ENCODE measurements at regions of chr3 and their contacts with region 1.

Region 1: DNA sequence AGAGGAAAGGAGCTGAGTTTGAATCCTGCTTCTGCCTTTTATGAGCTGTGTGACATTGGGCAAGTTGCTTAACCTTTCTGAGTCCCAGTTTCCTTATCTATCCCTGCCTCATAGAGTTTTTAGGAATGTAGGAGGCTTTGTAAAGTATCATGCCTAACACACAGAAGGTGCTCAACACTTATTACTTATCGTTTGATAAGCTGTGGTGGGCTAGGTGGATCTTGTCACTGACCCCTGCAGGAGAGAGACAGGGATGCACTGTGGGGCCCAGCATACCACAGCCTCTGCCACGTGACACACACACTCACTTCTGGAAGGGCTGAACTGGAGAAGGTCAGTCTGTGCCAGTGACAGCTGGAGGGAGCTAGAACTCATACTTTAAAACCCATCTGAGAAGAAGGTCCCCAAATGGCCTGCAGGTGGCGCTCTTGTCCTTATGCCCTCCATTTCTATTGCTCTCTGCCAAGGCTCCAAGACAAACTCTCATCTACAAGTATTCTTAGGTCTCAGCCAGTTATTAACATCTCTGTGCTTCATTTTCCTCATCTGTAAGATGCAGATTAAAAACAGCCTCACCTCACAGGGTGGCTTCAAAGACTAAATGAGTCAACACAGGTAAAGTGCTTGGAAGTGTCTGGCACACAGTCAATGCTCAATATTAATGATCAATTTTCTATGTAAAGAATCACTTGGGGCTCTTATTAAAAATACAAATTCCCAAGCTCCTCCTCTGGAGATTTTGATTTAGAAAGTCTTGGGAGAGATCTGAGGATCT is 57.5 kb upstream of the HACD2 start:
- DNase-seq: peak; percentile 84

Region 2: GRCh38 chr3:123652346-123652984 is 10.1 kb after region 1 on chr3:
- CTCF ChIA-PET with region 1: interaction called, 24 read pairs
- POLR2A ChIA-PET with region 1: no interaction called
- DNase-seq: peak; percentile 84

Region 3: DNA sequence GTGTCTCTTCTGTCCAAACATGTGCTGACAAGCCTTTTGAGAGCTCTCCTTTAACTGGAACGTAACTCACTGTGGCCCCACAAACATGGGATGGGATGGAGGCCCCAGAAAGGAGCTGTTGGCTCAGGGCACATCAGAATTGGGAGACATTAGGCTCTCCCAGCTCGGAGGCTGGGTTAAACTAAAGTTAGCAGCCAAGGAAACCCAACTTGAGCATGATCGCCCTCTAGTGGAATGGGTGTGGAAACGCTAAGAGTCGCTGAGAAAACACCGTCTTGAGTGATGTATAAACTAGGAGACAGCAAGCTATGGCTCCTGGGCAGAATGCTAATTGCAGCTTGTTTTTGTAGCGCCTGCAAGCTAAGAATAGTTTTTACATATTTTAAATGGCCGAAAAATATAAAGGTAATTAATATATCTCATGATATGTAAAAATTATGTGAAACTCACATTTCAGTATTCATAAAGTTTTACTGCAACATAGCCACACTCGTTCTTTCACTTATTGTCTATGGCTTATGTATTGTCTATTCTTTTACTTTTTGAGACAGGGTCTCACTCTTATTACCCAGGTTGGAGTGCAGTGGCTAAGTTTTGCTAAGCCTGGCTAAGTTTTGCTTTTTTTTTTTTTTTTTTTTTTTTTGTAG is 81.3 kb after region 1 on chr3:
- CTCF ChIA-PET with region 1: interaction called, 12 read pairs
- POLR2A ChIA-PET with region 1: no interaction called
- DNase-seq: peak; percentile 80